ENCODE measurements at regions of chr15 and their contacts with region 1.

Region 1: DNA sequence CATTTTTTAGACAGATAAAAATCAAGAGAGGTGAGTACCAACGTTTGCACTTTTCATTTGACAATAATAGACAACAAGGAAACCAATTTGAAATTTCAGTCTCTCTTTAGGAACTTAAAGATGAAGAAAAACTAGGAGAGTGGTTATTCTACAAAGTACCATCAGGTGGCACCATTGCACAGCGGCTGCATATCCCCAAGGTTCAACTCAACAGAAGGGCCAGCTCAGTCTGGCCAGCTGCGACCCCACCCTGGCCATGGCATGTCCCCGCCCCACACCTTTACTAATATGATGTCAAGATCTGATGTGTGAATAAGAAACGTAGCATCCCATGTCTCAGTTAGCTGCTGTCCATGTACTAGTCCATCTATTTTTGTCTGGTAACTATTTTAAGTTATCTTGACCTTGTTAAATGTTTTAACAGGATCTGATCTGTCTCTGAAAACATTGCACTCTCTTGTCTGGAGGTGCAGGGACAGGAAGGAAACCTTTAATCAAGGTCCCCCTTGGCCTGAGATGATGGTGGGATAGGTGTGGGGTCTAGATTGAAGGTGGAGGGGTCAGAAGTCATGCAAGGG is 35.5 kb upstream of the CGNL1 start:
- DNase-seq: no peak
- H3K4me3 ChIP-seq: no peak overlapping the region
- CTCF ChIP-seq: peak; percentile 65

Region 2: GRCh38 chr15:57111002-57111401 is 229.8 kb before region 1 on chr15:
- CTCF ChIA-PET with region 1: no interaction called
- POLR2A ChIA-PET with region 1: no interaction called
- DNase-seq: no peak
- H3K4me3 ChIP-seq: no peak overlapping the region
- CTCF ChIP-seq: no peak

Region 3: GRCh38 chr15:57323806-57324589 is 16.8 kb before region 1 on chr15:
- CTCF ChIA-PET with region 1: interaction called, 57 read pairs
- POLR2A ChIA-PET with region 1: no interaction called
- DNase-seq: no peak
- H3K4me3 ChIP-seq: no peak overlapping the region
- CTCF ChIP-seq: no peak

Region 4: GRCh38 chr15:57364282-57365007 is 23.7 kb after region 1 on chr15:
- CTCF ChIA-PET with region 1: interaction called, 119 read pairs
- POLR2A ChIA-PET with region 1: no interaction called
- DNase-seq: no peak
- H3K4me3 ChIP-seq: no peak overlapping the region
- CTCF ChIP-seq: peak; percentile 36

Region 5: DNA sequence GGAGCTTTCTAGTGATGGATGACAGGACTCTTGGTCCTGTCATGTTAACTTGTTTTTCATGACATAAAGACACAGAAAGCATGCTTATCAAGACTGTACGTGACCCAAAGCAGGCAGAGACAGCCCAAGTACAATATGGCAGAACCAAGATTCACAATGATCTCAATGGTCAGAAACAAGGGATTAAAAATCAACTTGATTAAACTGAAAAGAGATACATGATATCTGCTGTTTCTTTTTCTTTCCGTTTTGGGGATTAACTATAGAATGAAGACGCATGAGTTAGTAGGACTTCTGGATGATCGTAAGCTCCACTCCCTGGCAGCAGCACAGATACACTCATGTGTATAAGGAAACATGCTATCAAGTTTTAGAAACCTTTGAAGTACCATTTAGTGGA is 152.6 kb after region 1 on chr15:
- CTCF ChIA-PET with region 1: interaction called, 12 read pairs
- POLR2A ChIA-PET with region 1: no interaction called
- DNase-seq: no peak
- H3K4me3 ChIP-seq: no peak overlapping the region
- CTCF ChIP-seq: no peak

Region 6: GRCh38 chr15:57516327-57517031 is 175.7 kb after region 1 on chr15:
- CTCF ChIA-PET with region 1: interaction called, 148 read pairs
- POLR2A ChIA-PET with region 1: no interaction called
- DNase-seq: no peak
- H3K4me3 ChIP-seq: no peak overlapping the region
- CTCF ChIP-seq: no peak

Region 7: GRCh38 chr15:57527382-57528091 is 186.8 kb after region 1 on chr15:
- CTCF ChIA-PET with region 1: interaction called, 747 read pairs
- POLR2A ChIA-PET with region 1: interaction called, 5 read pairs
- DNase-seq: peak; percentile 65
- H3K4me3 ChIP-seq: no peak overlapping the region
- CTCF ChIP-seq: peak; percentile 42

Region 8: DNA sequence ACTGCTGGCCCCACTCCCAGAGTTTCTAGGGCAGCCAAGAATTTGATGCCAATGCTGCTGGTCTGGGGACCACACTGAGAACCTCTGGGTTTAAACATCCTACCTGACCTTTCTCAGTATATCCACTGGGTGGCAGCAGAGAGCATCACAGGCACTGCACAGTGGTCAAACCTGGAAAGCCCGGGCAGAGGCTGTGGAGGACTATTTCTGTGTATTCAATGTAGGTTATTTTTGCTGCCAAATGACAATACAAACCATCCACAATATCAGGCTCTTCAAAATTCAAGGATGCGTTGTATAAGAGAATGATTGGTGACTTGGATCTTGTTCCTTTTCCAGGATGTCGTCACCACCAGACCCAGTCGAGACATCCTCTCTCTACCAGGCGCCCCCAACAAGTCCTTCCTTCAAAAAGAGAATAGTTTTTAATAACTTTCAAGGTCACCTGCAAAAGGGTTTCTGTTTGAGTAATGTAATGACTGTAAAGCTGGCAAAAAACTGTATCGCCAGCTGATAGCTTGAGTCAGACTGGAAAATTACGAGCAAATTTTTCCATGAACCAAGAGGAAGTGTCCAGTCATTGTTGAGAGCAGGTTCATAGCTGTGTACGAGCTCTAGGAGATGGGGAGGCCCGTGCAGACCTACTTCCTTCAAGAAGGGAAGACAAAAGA is 220.4 kb after region 1 on chr15:
- CTCF ChIA-PET with region 1: interaction called, 17 read pairs
- POLR2A ChIA-PET with region 1: no interaction called
- DNase-seq: peak; percentile 10
- H3K4me3 ChIP-seq: no peak overlapping the region
- CTCF ChIP-seq: peak; percentile 87

Measured in AG04449 (cell line).